ENCODE measurements at regions of chr3 and their contacts with region 1.

Region 1: DNA sequence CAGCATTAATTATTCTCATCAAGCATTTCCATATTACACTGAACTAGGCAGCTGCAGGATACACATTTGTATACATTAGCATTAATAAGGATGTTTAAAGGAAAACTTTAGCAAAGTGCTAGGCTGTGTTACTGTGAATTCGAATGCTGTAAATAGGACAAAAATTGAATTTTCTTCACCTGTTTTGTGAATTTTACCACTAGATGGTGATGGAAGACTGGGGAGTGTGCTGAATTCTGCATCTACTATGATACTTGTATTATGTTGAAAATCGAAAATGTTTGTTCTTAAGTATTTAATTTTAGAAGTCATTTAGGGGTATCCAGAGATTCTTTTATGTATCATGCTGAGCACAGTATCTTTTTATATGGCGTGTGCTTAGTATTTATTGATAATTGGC is 12.3 kb upstream of the P2RY14 start:
- DNase-seq: no peak
- ATAC-seq: no peak
- H3K4me3 Mint-ChIP-seq: no peak overlapping the region
- H3K27ac Mint-ChIP-seq: no peak overlapping the region
- H3K4me1 Mint-ChIP-seq: no peaks in the 10 kb centered on the region
- H3K27me3 Mint-ChIP-seq: no peaks in the 10 kb centered on the region
- CTCF ChIP-seq: no peak

Region 2: GRCh38 chr3:151265866-151266265 is 24.8 kb before region 1 on chr3:
- CTCF ChIA-PET with region 1: no interaction called
- POLR2A ChIA-PET with region 1: no interaction called
- intact Hi-C with region 1: no loop called
- DNase-seq: peak; percentile 44
- ATAC-seq: peak; percentile 87
- H3K4me3 Mint-ChIP-seq: peak overlapping the region; percentile 60
- H3K27ac Mint-ChIP-seq: peak overlapping the region; percentile 98
- H3K4me1 Mint-ChIP-seq: peaks cover 66% of the 10 kb centered on the region
- H3K27me3 Mint-ChIP-seq: no peaks in the 10 kb centered on the region
- CTCF ChIP-seq: no peak

Region 3: GRCh38 chr3:151584566-151584965 is 293.9 kb after region 1 on chr3:
- CTCF ChIA-PET with region 1: no interaction called
- POLR2A ChIA-PET with region 1: no interaction called
- intact Hi-C with region 1: no loop called
- DNase-seq: no peak
- ATAC-seq: no peak
- H3K4me3 Mint-ChIP-seq: no peak overlapping the region
- H3K27ac Mint-ChIP-seq: no peak overlapping the region
- H3K4me1 Mint-ChIP-seq: no peaks in the 10 kb centered on the region
- H3K27me3 Mint-ChIP-seq: no peaks in the 10 kb centered on the region
- CTCF ChIP-seq: no peak

Region 4: GRCh38 chr3:151660885-151661284 is 370.2 kb after region 1 on chr3:
- CTCF ChIA-PET with region 1: no interaction called
- POLR2A ChIA-PET with region 1: no interaction called
- intact Hi-C with region 1: loop called (anchors 2 kb)
- DNase-seq: no peak
- ATAC-seq: no peak
- H3K4me3 Mint-ChIP-seq: no peak overlapping the region
- H3K27ac Mint-ChIP-seq: no peak overlapping the region
- H3K4me1 Mint-ChIP-seq: no peaks in the 10 kb centered on the region
- H3K27me3 Mint-ChIP-seq: no peaks in the 10 kb centered on the region
- CTCF ChIP-seq: no peak

Region 5: GRCh38 chr3:151838583-151839312 is 548.1 kb after region 1 on chr3:
- CTCF ChIA-PET with region 1: interaction called, 8 read pairs
- POLR2A ChIA-PET with region 1: no interaction called
- intact Hi-C with region 1: loop called (anchors 1 kb)
- DNase-seq: no peak
- ATAC-seq: peak; percentile 68
- H3K4me3 Mint-ChIP-seq: no peak overlapping the region
- H3K27ac Mint-ChIP-seq: no peak overlapping the region
- H3K4me1 Mint-ChIP-seq: no peaks in the 10 kb centered on the region
- H3K27me3 Mint-ChIP-seq: peaks cover 3% of the 10 kb centered on the region
- CTCF ChIP-seq: peak; percentile 55

Region 6: GRCh38 chr3:151918253-151919029 is 627.8 kb after region 1 on chr3:
- CTCF ChIA-PET with region 1: no interaction called
- POLR2A ChIA-PET with region 1: no interaction called
- intact Hi-C with region 1: loop called (anchors 1 kb)
- DNase-seq: no peak
- ATAC-seq: no peak
- H3K4me3 Mint-ChIP-seq: no peak overlapping the region
- H3K27ac Mint-ChIP-seq: no peak overlapping the region
- H3K4me1 Mint-ChIP-seq: no peaks in the 10 kb centered on the region
- H3K27me3 Mint-ChIP-seq: no peaks in the 10 kb centered on the region
- CTCF ChIP-seq: peak; percentile 18